Activated CD8-positive, alpha-beta memory T cell treated with anti-CD3 and anti-CD28 coated beads, Interleukin-2, amount 10 ng/mL, durations not matched to agents 7 days and 5 days (primary cell): ENCODE measurements at regions of chr1 and their contacts with region 1.

Region 1: GRCh38 chr1:25022361-25023189 is 92.5 kb upstream of the RUNX3 start:
- DNase-seq: peak; percentile 99
- ATAC-seq: peak; percentile 90
- H3K4me3 Mint-ChIP-seq: peak overlapping the region; percentile 71
- H3K27ac Mint-ChIP-seq: peak overlapping the region; percentile 97
- H3K4me1 Mint-ChIP-seq: peaks cover 80% of the 10 kb centered on the region
- H3K27me3 Mint-ChIP-seq: no peaks in the 10 kb centered on the region

Region 2: GRCh38 chr1:24964811-24965570 is 57.6 kb before region 1 on chr1:
- CTCF ChIA-PET with region 1: interaction called, 144 read pairs
- DNase-seq: peak; percentile 99
- ATAC-seq: peak; percentile 70
- H3K4me3 Mint-ChIP-seq: peak overlapping the region; percentile 89
- H3K27ac Mint-ChIP-seq: peak overlapping the region; percentile 92
- H3K4me1 Mint-ChIP-seq: peaks cover 56% of the 10 kb centered on the region
- H3K27me3 Mint-ChIP-seq: no peaks in the 10 kb centered on the region

Region 3: GRCh38 chr1:25006770-25007169 is 15.8 kb before region 1 on chr1:
- CTCF ChIA-PET with region 1: interaction called, 27 read pairs
- DNase-seq: no peak
- ATAC-seq: no peak
- H3K4me3 Mint-ChIP-seq: no peak overlapping the region
- H3K27ac Mint-ChIP-seq: no peak overlapping the region
- H3K4me1 Mint-ChIP-seq: peaks cover 80% of the 10 kb centered on the region
- H3K27me3 Mint-ChIP-seq: no peaks in the 10 kb centered on the region